ENCODE measurements at regions of chr17 and their contacts with region 1.

Region 1: DNA sequence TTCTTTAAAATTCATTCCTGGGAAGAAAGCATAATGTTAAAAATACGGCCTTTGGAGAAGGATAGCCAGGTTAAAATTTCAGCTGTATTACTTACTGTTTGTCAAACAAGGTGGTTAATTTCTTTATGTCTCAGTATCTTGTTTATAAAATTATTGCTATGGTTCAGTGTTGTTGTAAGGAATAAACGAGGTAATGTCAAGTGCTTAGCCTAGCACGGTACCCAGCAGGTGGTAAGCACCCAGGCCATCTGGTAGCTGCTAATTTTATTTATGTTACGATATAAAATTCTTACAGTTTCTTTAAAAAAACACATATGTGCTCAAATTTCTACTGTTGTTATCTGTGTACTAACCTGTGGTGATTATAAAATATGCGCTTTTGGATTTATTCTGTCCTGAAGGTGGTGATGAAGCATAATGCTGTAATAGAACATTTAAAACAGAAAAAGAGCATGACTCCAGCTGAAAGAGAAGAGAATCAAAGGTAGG is 48.9 kb downstream of the C17orf58 start:
- DNase-seq: no peak
- H3K4me3 Mint-ChIP-seq: no peak overlapping the region
- H3K27ac Mint-ChIP-seq: no peak overlapping the region
- H3K4me1 Mint-ChIP-seq: no peaks in the 10 kb centered on the region
- H3K27me3 Mint-ChIP-seq: no peaks in the 10 kb centered on the region

Region 2: DNA sequence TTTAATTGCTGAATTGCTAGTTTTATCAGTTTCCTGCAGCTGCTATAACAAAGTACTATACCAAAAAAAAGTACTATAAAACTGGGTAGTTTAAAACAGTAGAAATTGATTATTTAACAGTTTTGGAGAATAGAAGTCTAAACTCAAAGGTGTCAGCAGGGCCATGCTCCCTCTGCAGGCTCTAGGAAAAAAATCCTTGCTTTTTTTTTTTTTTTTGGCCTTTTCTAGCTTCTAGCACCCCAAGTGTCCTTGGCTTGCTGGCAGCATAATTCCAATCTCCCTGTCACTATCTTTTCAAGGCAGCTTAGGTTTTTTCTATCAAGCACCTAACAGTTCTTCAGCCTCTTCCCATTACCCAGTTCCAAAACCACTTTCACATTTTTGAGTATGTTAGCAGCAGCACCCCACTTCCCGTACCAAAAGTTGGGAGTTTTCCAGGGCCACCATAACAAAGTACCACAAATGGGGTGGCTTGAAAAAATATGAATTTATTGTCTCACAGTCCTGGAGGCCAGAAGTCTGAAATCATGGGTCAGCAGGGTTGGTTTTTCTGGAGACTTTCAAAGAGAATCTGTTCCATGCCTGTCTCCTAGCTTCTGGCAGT is 84.7 kb before region 1 on chr17:
- CTCF ChIA-PET with region 1: no interaction called
- POLR2A ChIA-PET with region 1: no interaction called
- intact Hi-C with region 1: no loop called
- DNase-seq: no peak
- H3K4me3 Mint-ChIP-seq: no peak overlapping the region
- H3K27ac Mint-ChIP-seq: peak overlapping the region; percentile 20
- H3K4me1 Mint-ChIP-seq: peaks cover 63% of the 10 kb centered on the region
- H3K27me3 Mint-ChIP-seq: no peaks in the 10 kb centered on the region

Region 3: DNA sequence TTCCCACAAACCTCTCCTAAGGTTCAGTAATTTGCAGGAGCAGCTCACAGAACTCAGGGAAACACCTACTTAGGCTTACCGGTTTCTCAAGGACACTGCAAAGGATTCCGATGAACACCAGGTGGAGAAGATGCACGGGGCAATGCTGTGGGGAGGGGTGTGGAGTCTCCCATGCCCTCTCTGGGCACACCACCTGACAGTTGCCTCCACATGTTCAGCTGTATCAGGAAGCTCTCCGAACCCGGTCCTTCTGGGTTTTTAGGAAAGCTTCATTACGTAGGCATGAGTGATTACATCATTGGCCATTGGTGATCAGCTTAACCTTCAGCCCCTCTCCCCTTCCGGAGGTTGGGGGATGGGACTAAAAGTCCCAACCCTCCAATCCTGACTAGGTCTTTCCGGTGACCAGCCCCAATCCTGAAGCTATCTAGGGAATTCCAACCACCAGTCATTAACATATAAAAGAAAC is 27.3 kb after region 1 on chr17:
- CTCF ChIA-PET with region 1: no interaction called
- POLR2A ChIA-PET with region 1: no interaction called
- intact Hi-C with region 1: loop called (anchors 1 kb)
- DNase-seq: no peak
- H3K4me3 Mint-ChIP-seq: no peak overlapping the region
- H3K27ac Mint-ChIP-seq: no peak overlapping the region
- H3K4me1 Mint-ChIP-seq: no peaks in the 10 kb centered on the region
- H3K27me3 Mint-ChIP-seq: no peaks in the 10 kb centered on the region

Measured in activated CD4-positive, alpha-beta memory T cell treated with anti-CD3 and anti-CD28 coated beads for 36 hours (primary cell).